ENCODE measurements at regions of chrX and their contacts with region 1.

Region 1: DNA sequence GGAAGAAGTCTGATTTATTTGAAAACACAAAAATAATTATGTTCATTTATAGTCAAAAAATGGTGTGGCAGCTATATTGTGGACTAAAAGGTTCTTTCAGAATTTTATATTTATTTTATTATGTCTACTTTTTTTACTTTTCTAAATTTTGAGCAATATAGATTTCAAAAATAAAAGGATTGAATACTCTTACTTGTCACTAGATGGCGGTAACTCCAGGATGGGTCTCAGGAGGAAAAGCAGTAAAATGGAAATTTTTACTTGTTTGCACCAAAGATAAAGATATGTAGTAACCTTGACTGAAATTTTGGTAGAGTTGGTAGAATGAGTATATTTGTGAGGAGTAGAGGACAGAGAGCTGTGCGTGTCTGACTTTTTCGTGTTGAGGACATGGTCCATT is 14.5 kb upstream of the DACH2 start:
- DNase-seq: no peak
- H3K4me3 Mint-ChIP-seq: no peak overlapping the region
- H3K27ac Mint-ChIP-seq: no peak overlapping the region
- H3K4me1 Mint-ChIP-seq: peaks cover 1% of the 10 kb centered on the region
- H3K27me3 Mint-ChIP-seq: peaks cover 3% of the 10 kb centered on the region

Region 2: GRCh38 chrX:86946569-86946968 is 812.8 kb after region 1 on chrX:
- CTCF ChIA-PET with region 1: no interaction called
- POLR2A ChIA-PET with region 1: no interaction called
- intact Hi-C with region 1: loop called (anchors 5 kb)
- DNase-seq: no peak
- H3K4me3 Mint-ChIP-seq: no peak overlapping the region
- H3K27ac Mint-ChIP-seq: no peak overlapping the region
- H3K4me1 Mint-ChIP-seq: no peaks in the 10 kb centered on the region
- H3K27me3 Mint-ChIP-seq: no peaks in the 10 kb centered on the region

Region 3: DNA sequence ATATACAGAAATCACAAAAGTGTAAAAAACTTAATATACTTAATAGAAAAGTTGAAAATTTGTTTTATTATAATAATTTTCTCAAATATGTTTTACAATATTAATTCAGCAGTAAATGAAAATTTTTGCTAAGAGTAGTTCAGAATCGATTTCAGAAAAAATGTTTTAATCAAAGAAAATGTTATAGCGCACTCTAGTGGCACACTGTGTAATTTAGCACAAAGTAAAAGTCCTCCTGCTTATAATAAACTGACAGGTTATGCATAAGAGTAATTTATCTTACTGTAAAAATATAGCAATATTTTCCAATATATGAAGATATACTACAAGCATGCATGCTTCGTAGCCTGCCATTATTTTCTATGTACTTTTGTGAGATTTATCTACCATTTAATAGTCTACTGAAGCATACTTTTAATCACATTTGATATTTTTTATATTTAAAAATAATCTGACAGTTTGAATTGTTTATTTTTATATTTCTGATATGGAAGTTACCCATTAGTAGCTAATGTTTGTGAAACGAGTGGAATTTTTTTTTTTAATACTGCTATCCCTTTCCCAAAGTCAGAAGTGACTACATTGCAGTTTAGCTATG is 1165.9 kb after region 1 on chrX:
- CTCF ChIA-PET with region 1: no interaction called
- POLR2A ChIA-PET with region 1: no interaction called
- intact Hi-C with region 1: loop called (anchors 10 kb)
- DNase-seq: no peak
- H3K4me3 Mint-ChIP-seq: no peak overlapping the region
- H3K27ac Mint-ChIP-seq: no peak overlapping the region
- H3K4me1 Mint-ChIP-seq: no peaks in the 10 kb centered on the region
- H3K27me3 Mint-ChIP-seq: no peaks in the 10 kb centered on the region

Measured in activated CD4-positive, alpha-beta memory T cell treated with anti-CD3 and anti-CD28 coated beads for 36 hours (primary cell).